Activated B cell treated with CpG ODN at 0.5 μM for 24 hours (primary cell): ENCODE measurements at regions of chr17 and their contacts with region 1.

Region 1: GRCh38 chr17:77957857-77958715 is at the start of gene TNRC6C:
- DNase-seq: peak; percentile 98
- ATAC-seq: peak; percentile 85
- H3K4me3 Mint-ChIP-seq: peak within 1 kb of the TSS; percentile 89
- H3K27ac Mint-ChIP-seq: peak within 1 kb of the TSS; percentile 96
- H3K4me1 Mint-ChIP-seq: peaks cover 41% of the 10 kb centered on the region
- H3K27me3 Mint-ChIP-seq: peaks cover 15% of the 10 kb centered on the region
- CTCF ChIP-seq: no peak
- total RNA-seq, gene TNRC6C: 14.4 and 24.6 TPM in 2 replicates

Region 2: GRCh38 chr17:76726231-76726775 is 1231.8 kb before region 1 on chr17 and contains the start of gene JMJD6:
- CTCF ChIA-PET with region 1: no interaction called
- POLR2A ChIA-PET with region 1: no interaction called
- intact Hi-C with region 1: loop called (anchors 2 kb)
- DNase-seq: peak; percentile 83
- ATAC-seq: peak; percentile 75
- H3K4me3 Mint-ChIP-seq: peak within 1 kb of the TSS; percentile 96
- H3K27ac Mint-ChIP-seq: peak within 1 kb of the TSS; percentile 95
- H3K4me1 Mint-ChIP-seq: peaks cover 48% of the 10 kb centered on the region
- H3K27me3 Mint-ChIP-seq: no peaks in the 10 kb centered on the region
- CTCF ChIP-seq: no peak
- total RNA-seq, gene JMJD6: 32.7 and 33.1 TPM in 2 replicates

Region 3: GRCh38 chr17:77404812-77405581 is 553.1 kb before region 1 on chr17:
- CTCF ChIA-PET with region 1: no interaction called
- POLR2A ChIA-PET with region 1: interaction called, 16 read pairs
- intact Hi-C with region 1: no loop called
- DNase-seq: peak; percentile 60
- ATAC-seq: peak; percentile 70
- H3K4me3 Mint-ChIP-seq: peak overlapping the region; percentile 89
- H3K27ac Mint-ChIP-seq: peak overlapping the region; percentile 96
- H3K4me1 Mint-ChIP-seq: peaks cover 94% of the 10 kb centered on the region
- H3K27me3 Mint-ChIP-seq: no peaks in the 10 kb centered on the region
- CTCF ChIP-seq: no peak

Region 4: GRCh38 chr17:77609553-77610517 is 348.3 kb before region 1 on chr17:
- CTCF ChIA-PET with region 1: no interaction called
- POLR2A ChIA-PET with region 1: interaction called, 19 read pairs
- intact Hi-C with region 1: no loop called
- DNase-seq: peak; percentile 26
- ATAC-seq: peak; percentile 95
- H3K4me3 Mint-ChIP-seq: peak overlapping the region; percentile 73
- H3K27ac Mint-ChIP-seq: peak overlapping the region; percentile 79
- H3K4me1 Mint-ChIP-seq: peaks cover 24% of the 10 kb centered on the region
- H3K27me3 Mint-ChIP-seq: peaks cover 2% of the 10 kb centered on the region
- CTCF ChIP-seq: no peak

Region 5: GRCh38 chr17:77704048-77704815 is 253.9 kb before region 1 on chr17:
- CTCF ChIA-PET with region 1: no interaction called
- POLR2A ChIA-PET with region 1: no interaction called
- intact Hi-C with region 1: no loop called
- DNase-seq: no peak
- ATAC-seq: no peak
- H3K4me3 Mint-ChIP-seq: no peak overlapping the region
- H3K27ac Mint-ChIP-seq: no peak overlapping the region
- H3K4me1 Mint-ChIP-seq: no peaks in the 10 kb centered on the region
- H3K27me3 Mint-ChIP-seq: peaks cover 19% of the 10 kb centered on the region
- CTCF ChIP-seq: no peak

Region 6: GRCh38 chr17:77734341-77735080 is 223.6 kb before region 1 on chr17:
- CTCF ChIA-PET with region 1: no interaction called
- POLR2A ChIA-PET with region 1: no interaction called
- intact Hi-C with region 1: no loop called
- DNase-seq: peak; percentile 8
- ATAC-seq: no peak
- H3K4me3 Mint-ChIP-seq: no peak overlapping the region
- H3K27ac Mint-ChIP-seq: no peak overlapping the region
- H3K4me1 Mint-ChIP-seq: no peaks in the 10 kb centered on the region
- H3K27me3 Mint-ChIP-seq: peaks cover 27% of the 10 kb centered on the region
- CTCF ChIP-seq: no peak

Region 7: DNA sequence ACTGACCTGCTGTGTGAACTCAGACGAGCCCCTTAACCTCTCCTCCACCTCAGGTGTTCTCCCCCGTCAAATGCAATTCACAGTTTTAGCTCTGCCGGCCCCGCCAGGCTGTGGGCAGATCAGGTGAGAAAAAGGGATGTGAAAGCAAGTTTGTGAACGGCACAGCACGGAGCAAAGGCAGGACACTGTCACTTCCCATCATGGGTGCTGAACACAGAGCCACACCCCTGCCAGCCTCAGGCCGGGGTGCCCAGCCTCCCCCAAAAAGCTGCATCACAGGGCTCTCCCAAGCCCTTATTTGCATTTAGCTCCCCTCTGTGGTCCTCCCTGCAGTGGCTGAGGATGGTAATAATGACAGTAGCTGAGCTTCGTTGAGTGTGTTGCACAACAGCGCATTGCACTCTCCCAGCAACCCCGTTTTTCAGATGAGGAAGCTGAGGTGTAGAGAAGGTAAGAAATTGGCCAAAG is 88.4 kb before region 1 on chr17:
- CTCF ChIA-PET with region 1: interaction called, 4 read pairs
- POLR2A ChIA-PET with region 1: interaction called, 114 read pairs
- intact Hi-C with region 1: loop called (anchors 1 kb)
- DNase-seq: peak; percentile 70
- ATAC-seq: peak; percentile 95
- H3K4me3 Mint-ChIP-seq: peak overlapping the region; percentile 57
- H3K27ac Mint-ChIP-seq: peak overlapping the region; percentile 69
- H3K4me1 Mint-ChIP-seq: peaks cover 58% of the 10 kb centered on the region
- H3K27me3 Mint-ChIP-seq: peaks cover 3% of the 10 kb centered on the region
- CTCF ChIP-seq: no peak

Region 8: GRCh38 chr17:77942112-77942988 is 15.7 kb before region 1 on chr17:
- CTCF ChIA-PET with region 1: no interaction called
- POLR2A ChIA-PET with region 1: interaction called, 21 read pairs
- intact Hi-C with region 1: no loop called
- DNase-seq: no peak
- ATAC-seq: no peak
- H3K4me3 Mint-ChIP-seq: no peak overlapping the region
- H3K27ac Mint-ChIP-seq: no peak overlapping the region
- H3K4me1 Mint-ChIP-seq: no peaks in the 10 kb centered on the region
- H3K27me3 Mint-ChIP-seq: peaks cover 39% of the 10 kb centered on the region
- CTCF ChIP-seq: no peak